Left cardiac atrium (tissue), 4 donors: ENCODE measurements at regions of chr4 and their contacts with region 1.

Region 1: DNA sequence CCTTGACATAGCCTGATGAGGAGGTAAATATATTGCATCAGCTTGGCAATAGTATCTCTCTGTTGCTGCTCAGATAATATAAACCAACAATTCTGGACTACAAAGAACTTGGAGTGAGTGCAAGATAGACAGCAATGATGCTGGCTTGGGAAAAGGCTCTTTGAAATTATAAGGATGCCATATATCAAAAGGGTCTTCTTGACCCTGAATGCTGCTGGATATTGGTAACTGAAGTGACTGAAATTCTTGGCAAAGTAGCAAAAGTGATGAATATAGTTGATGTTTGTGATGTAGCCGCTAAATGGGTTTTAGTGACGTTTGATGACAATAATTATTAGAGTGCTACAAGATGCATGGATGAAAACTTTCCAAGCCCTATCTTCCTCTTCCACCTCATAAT is 1391.6 kb downstream of the ADGRL3 start:
- DNase-seq: no peak
- ATAC-seq: no peak

Region 2: DNA sequence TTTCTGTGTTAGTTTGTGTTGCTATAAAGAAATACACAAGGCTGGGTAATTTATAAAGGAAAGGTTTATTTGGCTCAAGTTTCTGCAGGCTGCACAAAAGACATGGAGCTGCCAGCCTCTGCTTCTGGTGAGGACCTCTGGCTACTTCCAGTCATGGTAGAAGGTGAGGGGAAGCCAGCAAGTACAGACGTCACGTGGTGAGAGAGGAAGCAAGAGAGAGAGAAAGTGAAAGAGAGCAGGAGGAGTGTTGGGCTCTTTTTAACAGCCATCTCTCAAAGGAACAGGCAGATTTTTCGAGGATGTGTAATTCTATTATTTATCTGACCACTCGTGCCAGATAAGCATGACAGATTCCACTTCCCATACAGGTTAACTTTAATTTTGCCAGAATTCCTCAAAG is 192.5 kb before region 1 on chr4:
- intact Hi-C with region 1: no loop called
- DNase-seq: no peak
- ATAC-seq: peak; percentile 70 to 76

Region 3: DNA sequence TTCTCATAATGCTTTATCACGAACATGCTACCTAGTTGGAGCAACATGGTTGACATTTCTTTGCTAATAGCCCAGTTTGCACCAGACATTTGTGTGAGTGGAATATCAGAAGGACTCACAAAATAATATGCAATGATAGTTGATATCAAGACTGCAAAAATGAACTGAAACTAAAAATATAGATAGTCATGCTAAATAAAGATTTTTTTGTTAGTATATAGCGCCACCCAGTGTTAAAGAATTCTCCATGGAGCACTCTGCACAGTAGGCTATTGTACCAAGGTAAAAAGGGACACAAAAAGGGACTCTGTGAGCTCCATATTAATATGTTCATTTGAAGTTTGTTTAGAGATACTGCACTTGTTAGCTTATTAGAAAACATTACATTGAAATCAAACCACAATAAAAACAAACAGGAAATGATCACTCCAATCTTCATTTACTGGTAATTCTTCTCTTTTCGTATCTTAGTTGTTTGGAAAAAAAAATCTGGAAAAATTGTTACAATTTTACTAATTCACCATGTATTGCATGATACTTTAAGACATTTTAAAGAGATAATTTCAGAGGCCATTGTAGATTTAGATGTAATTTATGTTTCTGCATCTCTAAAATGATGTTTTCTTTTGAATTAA is 118.0 kb after region 1 on chr4:
- intact Hi-C with region 1: loop called in 1 of 2 experiments (anchors 5 kb)
- DNase-seq: no peak
- ATAC-seq: peak; percentile 43 to 82

Region 4: GRCh38 chr4:63563288-63564014 is 971.7 kb after region 1 on chr4:
- intact Hi-C with region 1: loop called in 1 of 2 experiments (anchors 10 kb)
- DNase-seq: no peak
- ATAC-seq: no peak